ENCODE measurements at regions of chrX and their contacts with region 1.

Region 1: GRCh38 chrX:26778320-26778888 is 562.4 kb downstream of the MAGEB5 start:
- DNase-seq: no peak
- ATAC-seq: no peak
- H3K4me3 ChIP-seq: no peak overlapping the region
- H3K27ac ChIP-seq: no peak overlapping the region
- H3K4me1 ChIP-seq: no peaks in the 10 kb centered on the region
- H3K27me3 ChIP-seq: no peaks in the 10 kb centered on the region
- CTCF ChIP-seq: no peak
- POLR2A ChIP-seq: no peak
- RAD21 ChIP-seq: no peak

Region 2: DNA sequence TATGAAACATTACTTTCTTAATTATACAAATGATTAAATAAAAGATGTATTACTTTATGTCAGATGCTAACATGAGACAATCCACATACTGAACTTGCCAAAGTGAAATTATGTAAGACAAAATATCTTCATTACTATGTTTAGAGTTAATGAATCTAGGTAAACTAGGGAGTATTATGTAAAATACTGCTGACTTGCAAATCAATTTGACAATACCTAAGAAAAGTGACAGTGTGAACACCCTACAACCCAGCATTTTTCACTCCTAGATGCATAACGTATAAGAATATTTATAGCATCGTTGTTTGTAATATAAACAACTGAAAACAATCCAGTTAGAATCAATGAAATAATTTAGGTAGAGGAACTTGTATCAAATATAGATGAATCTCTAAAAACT is 16.2 kb before region 1 on chrX:
- CTCF ChIA-PET with region 1: no interaction called
- POLR2A ChIA-PET with region 1: no interaction called
- dilution Hi-C with region 1: no loop called
- in situ Hi-C with region 1: no loop called
- intact Hi-C with region 1: no loop called
- DNase-seq: no peak
- ATAC-seq: no peak
- H3K4me3 ChIP-seq: no peak overlapping the region
- H3K27ac ChIP-seq: no peak overlapping the region
- H3K4me1 ChIP-seq: no peaks in the 10 kb centered on the region
- H3K27me3 ChIP-seq: no peaks in the 10 kb centered on the region
- CTCF ChIP-seq: no peak
- POLR2A ChIP-seq: no peak
- RAD21 ChIP-seq: no peak

Region 3: DNA sequence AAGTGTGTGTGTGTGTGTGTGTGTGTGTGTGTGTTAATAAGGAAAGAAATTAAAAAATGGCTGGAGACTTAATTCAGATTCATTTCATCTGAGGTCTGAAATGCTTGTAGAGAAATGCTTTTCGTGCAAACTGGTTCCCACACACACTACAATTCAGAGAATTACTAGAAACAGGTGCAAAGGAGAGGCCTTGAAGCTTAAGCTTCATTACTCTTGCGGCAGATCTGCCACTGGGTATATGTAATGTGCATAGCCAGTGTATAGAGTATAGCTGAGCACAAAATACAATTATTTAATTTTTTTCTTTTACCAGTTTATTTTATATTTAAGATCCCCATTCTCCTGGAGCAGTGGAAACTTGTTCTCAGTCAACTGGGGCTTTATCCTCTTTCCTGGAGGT is 997.6 kb after region 1 on chrX:
- CTCF ChIA-PET with region 1: no interaction called
- POLR2A ChIA-PET with region 1: no interaction called
- dilution Hi-C with region 1: no loop called
- in situ Hi-C with region 1: no loop called
- intact Hi-C with region 1: loop called (anchors 10 kb)
- DNase-seq: no peak
- ATAC-seq: no peak
- H3K4me3 ChIP-seq: no peak overlapping the region
- H3K27ac ChIP-seq: no peak overlapping the region
- H3K4me1 ChIP-seq: no peaks in the 10 kb centered on the region
- H3K27me3 ChIP-seq: no peaks in the 10 kb centered on the region
- CTCF ChIP-seq: no peak
- POLR2A ChIP-seq: no peak
- RAD21 ChIP-seq: no peak